Left cardiac atrium (tissue), 4 donors: ENCODE measurements at regions of chr11 and their contacts with region 1.

Region 1: DNA sequence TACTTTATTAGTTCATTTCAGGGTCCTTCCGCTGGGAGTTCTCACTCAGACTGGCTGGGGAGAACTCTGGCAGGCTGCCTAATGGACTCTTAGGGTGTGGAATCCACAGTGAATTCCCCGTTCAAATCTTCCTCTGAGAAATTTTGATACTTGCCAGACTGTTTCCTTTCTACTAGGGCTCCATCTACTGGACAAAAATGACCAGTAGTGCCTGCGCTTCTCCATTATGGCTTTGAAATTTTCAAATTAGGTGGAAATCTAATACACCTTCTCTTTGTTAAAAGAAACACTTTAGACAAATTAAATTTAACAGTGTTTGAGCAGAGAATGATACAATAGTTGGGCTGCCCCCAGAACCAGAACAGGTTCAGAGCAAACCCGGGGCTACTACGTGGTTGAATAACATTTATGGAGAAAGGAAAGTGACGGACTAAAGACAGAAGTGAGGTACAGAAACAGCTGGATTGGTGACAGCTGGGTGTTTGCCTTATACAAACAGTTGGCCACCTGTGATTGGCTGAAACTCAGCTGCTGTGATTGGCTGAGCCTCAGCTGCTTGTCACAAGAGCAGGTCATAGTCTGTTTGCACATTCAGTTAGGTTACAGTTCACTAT is 52.9 kb upstream of the FDX1 start:
- DNase-seq: peak; percentile 86
- ATAC-seq: peak; percentile 89 to 91

Region 2: GRCh38 chr11:109939166-109939810 is 437.5 kb before region 1 on chr11:
- intact Hi-C with region 1: loop called in 1 of 2 experiments (anchors 5 kb)
- DNase-seq: no peak
- ATAC-seq: peak; percentile 77 to 86

Region 3: GRCh38 chr11:110200241-110200640 is 176.6 kb before region 1 on chr11:
- intact Hi-C with region 1: loop called in 1 of 2 experiments (anchors 2 kb)
- DNase-seq: no peak
- ATAC-seq: no peak

Region 4: GRCh38 chr11:110296226-110297075 is 80.4 kb before region 1 on chr11 and contains the start of gene RDX:
- intact Hi-C with region 1: loop called in 1 of 2 experiments (anchors 5 kb)
- DNase-seq: peak; percentile 86
- ATAC-seq: peak; percentile 92 to 93
- total RNA-seq, gene RDX: 97.5 to 100 TPM

Region 5: GRCh38 chr11:110429731-110430266 is 53.0 kb after region 1 on chr11 and contains the start of gene FDX1:
- intact Hi-C with region 1: loop called in 1 of 2 experiments (anchors 5 kb)
- DNase-seq: peak; percentile 89
- ATAC-seq: peak; percentile 95 to 96
- total RNA-seq, gene FDX1: 11.8 to 16.2 TPM